HEK293 (cell line): ENCODE measurements at regions of chr2 and their contacts with region 1.

Region 1: DNA sequence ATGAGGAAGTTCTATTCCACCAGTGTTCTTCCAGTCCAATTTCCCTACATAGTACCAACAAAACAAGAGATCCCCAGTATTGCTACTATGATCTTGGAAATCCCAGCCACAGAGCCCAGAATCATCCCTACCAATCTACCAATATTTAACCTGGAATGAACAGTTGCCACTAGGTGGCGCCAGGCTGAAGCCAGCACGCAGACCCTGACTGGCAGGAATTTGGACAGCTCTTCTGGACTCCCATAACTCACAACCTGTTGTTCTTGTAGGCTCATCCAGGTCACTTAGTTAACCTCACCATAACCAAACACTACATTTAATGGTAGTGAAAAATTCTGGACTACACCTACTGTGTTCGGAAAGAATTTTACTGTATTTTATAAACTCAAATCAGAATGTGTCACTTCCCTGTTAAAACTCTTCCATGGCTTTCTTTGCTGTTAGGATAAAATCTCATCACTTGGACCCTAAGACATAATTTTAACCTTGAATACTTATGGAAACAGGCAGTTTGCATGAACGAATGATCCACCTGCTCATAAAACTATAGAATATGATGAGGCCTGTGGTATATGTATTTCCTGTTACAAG is 59.8 kb upstream of the SLC38A11 start:
- H3K4me3 ChIP-seq: no peak overlapping the region
- H3K27ac ChIP-seq: no peak overlapping the region
- H3K4me1 ChIP-seq: no peaks in the 10 kb centered on the region
- CTCF ChIP-seq: peak; percentile 72

Region 2: GRCh38 chr2:164933671-164934189 is 81.4 kb before region 1 on chr2:
- CTCF ChIA-PET with region 1: no interaction called
- POLR2A ChIA-PET with region 1: no interaction called
- H3K4me3 ChIP-seq: no peak overlapping the region
- H3K27ac ChIP-seq: no peak overlapping the region
- H3K4me1 ChIP-seq: no peaks in the 10 kb centered on the region
- CTCF ChIP-seq: no peak

Region 3: DNA sequence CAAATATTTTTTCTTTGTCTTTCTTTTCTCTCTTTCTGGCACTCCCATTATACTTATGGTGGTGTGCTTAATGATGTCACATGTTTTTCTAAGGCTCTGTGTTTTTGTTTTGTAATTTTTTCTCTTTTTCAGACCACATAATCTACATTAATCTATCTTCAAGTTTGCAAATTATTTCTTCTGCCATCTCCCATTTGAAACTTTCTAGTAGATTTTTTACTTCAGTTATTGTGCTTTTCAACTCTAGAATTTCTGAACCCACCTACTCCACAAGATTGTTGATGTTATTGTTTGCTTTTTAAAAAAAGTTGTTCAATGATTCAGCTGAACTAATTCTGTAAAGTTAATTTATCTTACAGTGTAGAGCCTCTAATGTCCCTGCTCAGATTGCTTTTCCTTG is 67.3 kb after region 1 on chr2:
- CTCF ChIA-PET with region 1: interaction called, 11 read pairs
- POLR2A ChIA-PET with region 1: no interaction called
- H3K4me3 ChIP-seq: no peak overlapping the region
- H3K27ac ChIP-seq: no peak overlapping the region
- H3K4me1 ChIP-seq: no peaks in the 10 kb centered on the region
- CTCF ChIP-seq: no peak

Region 4: DNA sequence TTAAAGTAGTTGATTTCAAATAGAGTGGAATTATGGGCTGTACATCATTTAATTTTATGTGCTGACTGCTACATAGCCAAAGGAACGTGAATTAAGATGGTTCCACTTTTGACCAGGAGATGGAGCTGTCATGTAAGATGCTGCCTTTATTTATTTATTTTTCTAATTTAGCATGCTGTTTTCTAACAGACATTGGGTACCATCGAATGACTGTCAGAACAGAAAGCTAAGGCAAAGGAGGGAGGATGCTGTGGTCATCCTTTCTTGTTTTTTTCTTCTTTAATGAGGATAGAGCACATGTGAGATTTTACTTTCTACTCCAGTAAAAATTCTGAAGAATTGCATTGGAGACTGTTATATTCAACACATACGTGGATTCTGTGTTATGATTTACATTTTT is 224.1 kb after region 1 on chr2 and contains the start of gene SCN2A:
- CTCF ChIA-PET with region 1: interaction called, 12 read pairs
- POLR2A ChIA-PET with region 1: no interaction called
- H3K4me3 ChIP-seq: no peak within 1 kb of the TSS
- H3K27ac ChIP-seq: no peak within 1 kb of the TSS
- H3K4me1 ChIP-seq: no peaks in the 10 kb centered on the region
- CTCF ChIP-seq: peak; percentile 19; the same call in 1 of the 2 replicates

Region 5: DNA sequence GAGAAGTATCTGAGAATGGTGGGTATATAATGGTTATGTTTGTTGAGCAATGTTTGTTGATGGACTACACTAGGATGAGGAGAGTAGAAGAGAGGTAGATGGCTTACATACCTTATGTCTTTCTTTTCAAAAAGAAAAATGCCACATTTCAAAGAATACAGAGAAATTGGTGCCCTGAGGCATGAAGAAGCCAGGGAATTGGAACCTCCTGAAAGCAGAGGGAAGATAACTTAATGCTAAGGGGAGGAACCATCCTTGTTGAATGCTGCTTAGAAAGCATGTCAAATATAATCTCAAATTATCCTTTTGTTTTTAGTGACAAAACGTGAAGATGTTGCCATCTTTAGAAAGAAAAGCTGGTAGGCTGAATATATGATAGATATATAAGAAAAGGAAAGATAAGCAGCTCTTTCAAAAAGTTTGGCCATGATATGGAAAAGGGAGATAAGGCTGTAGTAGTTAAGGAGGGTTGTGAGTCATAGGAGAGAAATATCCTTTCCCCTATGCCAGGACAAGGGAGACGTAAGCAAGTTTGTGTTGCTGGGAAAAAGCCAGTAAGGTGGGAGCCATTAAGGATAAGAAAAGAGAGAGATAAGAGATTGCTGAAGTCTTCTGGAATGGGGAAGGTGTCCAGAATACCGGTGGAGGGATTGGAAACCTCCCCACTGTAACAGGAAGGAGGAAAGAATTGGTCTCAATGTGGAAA is 290.4 kb after region 1 on chr2:
- CTCF ChIA-PET with region 1: interaction called, 11 read pairs
- POLR2A ChIA-PET with region 1: no interaction called
- H3K4me3 ChIP-seq: no peak overlapping the region
- H3K27ac ChIP-seq: no peak overlapping the region
- H3K4me1 ChIP-seq: no peaks in the 10 kb centered on the region
- CTCF ChIP-seq: no peak